Activated T-helper 2 cell treated with anti-CD3 and anti-CD28 coated beads, Interferon-gamma antibody, Interleukin-2, Interleukin-4, amounts not matched to agents 10 μg/mL and 5 μg/mL and 100 μg/mL, durations not matched to agents 14 hours and 24 hours and 36 hours (primary cell): ENCODE measurements at regions of chr1 and their contacts with region 1.

Region 1: GRCh38 chr1:156728597-156729462 is at the start of gene ISG20L2:
- DNase-seq: peak; percentile 96
- H3K4me3 Mint-ChIP-seq: no peak within 1 kb of the TSS
- H3K27ac Mint-ChIP-seq: peak within 1 kb of the TSS; percentile 99
- H3K4me1 Mint-ChIP-seq: peaks cover 20% of the 10 kb centered on the region
- H3K27me3 Mint-ChIP-seq: no peaks in the 10 kb centered on the region
- total RNA-seq, gene ISG20L2: 52.2 and 57.4 TPM in 2 replicates

Region 2: DNA sequence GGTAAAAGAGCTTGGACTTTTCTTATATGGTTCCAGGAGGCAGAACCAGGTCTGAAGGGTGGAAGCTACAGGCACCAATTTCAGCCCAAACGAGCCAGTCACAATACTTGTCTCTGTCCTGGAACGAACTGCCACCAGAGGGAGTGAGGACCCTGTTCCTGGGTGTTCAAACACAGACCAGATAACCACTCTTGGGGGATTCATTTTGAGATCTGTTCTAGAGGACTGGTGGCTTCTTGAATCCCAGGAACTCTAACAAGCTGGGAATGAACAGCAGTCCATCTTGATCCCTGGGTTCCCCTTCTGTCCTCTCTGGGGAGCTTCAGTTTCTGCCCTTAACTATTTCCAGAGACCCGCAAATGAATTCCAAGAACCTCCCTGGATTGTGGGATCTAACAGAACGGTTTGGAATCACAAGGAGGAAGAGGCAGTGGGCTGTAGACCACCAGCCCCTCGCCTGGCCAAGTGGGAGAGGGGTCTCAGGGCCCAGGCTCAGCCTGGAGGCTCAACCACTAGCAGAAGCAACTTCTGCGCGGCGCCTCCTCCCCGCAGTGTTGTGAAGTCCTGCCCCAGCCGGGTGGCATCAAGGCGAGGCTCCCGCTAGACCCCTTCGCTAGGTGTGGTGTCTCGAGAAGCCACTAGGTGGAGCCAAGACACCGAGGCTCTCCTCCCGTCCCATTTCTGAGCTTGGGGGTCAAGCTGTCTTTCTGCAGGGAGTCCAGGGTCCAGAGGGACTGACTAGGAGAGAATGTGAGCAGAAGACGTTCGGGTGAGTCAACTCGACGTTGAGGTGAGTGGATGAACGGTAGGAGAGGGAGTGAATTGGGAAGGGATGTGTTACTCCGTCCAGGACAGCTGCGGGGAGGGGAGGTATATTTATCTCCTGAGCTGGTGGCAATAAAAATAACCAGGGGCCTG is 39.5 kb before region 1 on chr1:
- intact Hi-C with region 1: loop called (anchors 1 kb)
- DNase-seq: peak; percentile 57
- H3K4me3 Mint-ChIP-seq: no peak overlapping the region
- H3K27ac Mint-ChIP-seq: no peak overlapping the region
- H3K4me1 Mint-ChIP-seq: peaks cover 20% of the 10 kb centered on the region
- H3K27me3 Mint-ChIP-seq: peaks cover 51% of the 10 kb centered on the region

Region 3: DNA sequence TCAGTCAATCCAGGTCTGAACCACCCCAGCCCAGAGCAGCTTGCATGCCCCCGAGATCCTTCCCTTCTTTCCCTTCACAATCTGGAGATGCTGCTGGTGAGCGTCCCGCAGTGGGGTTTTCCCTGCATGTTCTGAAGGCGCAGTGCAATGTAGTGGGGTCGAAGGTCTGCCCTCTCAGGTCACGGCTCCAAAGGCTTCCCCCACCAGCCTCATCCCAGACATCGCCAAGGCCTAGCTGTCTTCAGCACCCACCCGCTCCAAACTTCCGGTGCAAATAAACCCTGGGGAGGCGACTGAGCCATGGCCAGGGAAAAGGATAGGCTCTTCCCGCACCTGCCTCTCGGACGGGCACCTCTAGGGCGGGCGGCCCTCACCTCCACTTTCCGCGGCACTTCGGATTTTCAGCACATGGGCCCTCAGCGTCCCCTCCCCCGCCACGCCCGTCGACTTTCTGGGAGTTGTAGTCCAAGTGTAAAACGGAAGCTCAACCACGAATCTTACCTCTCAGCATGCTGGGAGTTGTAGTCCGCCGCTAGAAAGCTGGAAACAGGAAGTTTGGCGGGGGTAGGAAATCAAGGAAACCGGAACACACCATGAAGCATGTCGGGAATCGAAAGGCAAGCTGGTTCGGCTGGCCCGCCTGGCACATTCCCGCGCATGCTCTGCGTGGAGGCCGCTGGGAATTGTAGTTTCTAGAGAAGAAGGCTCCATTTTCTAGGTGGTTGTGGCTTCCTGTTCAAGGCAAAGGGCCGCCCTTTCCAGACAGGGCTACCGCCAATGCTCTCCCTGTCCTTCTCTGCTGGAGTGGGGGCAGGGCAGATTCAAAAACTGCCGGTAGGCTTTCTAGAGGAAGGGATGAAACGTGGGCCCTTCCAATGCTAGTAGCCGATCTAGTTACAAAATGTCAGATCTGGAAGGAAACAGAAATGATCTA is 12.1 kb after region 1 on chr1 and contains the start of gene MRPL24:
- intact Hi-C with region 1: loop called (anchors 1 kb)
- DNase-seq: peak; percentile 97
- H3K4me3 Mint-ChIP-seq: peak within 1 kb of the TSS; percentile 95
- H3K27ac Mint-ChIP-seq: peak within 1 kb of the TSS; percentile 92
- H3K4me1 Mint-ChIP-seq: peaks cover 29% of the 10 kb centered on the region
- H3K27me3 Mint-ChIP-seq: no peaks in the 10 kb centered on the region
- total RNA-seq, gene MRPL24: 116 and 124 TPM in 2 replicates

Region 4: GRCh38 chr1:156767101-156767878 is 38.5 kb after region 1 on chr1 and contains the start of gene PRCC:
- intact Hi-C with region 1: loop called (anchors 1 kb)
- DNase-seq: peak; percentile 98
- H3K4me3 Mint-ChIP-seq: no peak within 1 kb of the TSS
- H3K27ac Mint-ChIP-seq: no peak within 1 kb of the TSS
- H3K4me1 Mint-ChIP-seq: peaks cover 36% of the 10 kb centered on the region
- H3K27me3 Mint-ChIP-seq: no peaks in the 10 kb centered on the region
- total RNA-seq, gene PRCC: 94.8 and 110 TPM in 2 replicates

Region 5: DNA sequence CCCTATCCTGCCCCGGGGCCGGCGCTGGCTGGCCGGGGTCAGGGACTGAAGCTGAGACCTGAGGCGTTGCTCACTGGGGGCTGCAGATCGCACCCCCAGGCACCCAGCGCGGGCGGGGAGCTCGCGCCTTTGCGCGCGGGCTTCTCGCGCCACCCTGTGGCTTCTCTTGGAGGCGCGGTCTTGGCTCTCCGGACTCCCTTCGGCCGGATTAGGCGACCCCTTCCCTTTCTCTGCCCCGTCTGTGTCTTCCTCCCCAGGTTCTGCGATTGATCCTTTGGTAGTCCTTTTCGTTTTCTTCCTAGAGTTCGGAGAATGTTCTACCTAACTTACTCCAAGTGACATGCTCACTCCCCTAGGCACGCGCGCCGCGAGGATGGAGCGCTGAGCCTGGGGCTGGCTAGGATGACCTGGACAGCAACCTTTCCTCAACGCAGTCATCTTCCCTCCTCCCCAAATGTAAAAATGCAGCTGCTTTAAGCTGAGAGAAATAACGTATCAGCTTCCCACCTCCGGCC is 131.3 kb after region 1 on chr1:
- intact Hi-C with region 1: loop called (anchors 2 kb)
- DNase-seq: peak; percentile 48
- H3K4me3 Mint-ChIP-seq: peak overlapping the region; percentile 87
- H3K27ac Mint-ChIP-seq: peak overlapping the region; percentile 44
- H3K4me1 Mint-ChIP-seq: peaks cover 44% of the 10 kb centered on the region
- H3K27me3 Mint-ChIP-seq: peaks cover 27% of the 10 kb centered on the region

Region 6: DNA sequence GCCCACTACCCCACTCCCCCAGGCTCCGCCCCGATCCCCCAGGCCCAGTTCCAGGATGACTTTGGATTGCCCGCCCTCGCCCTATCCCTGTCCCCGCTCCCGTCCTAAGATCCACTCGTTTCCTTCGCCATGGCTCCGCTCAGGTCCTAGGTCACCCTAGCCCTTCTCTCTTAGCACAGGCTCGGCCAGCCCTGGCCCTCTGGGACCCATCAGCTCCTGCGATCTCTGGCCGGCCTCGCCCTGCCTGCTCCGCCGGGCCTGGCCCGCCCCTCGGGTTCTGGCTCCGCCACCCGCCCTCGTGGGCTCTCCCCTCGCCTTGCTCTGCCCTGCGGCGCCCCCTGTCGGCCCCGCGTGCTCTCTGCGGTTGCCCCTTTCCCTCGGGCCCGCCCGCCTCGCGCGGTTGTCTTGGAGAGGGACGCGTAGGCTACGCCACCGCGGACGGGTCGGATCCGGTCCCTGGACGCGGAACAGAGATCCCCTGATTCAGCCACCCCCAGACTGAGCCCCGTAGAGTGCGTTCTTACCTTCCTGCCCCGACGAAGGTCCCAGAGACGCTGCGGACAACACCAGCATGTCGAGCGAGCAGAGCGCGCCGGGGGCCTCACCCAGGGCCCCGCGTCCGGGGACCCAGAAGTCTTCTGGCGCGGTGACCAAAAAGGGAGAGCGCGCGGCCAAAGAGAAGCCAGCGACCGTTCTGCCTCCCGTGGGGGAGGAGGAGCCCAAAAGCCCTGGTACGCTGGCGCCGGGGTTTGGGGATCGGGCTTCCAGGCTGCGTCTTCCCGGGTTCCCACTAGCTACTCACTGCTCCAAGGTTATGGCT is 191.6 kb after region 1 on chr1 and contains the start of gene LRRC71:
- intact Hi-C with region 1: no loop called
- DNase-seq: peak; percentile 63
- H3K4me3 Mint-ChIP-seq: no peak within 1 kb of the TSS
- H3K27ac Mint-ChIP-seq: no peak within 1 kb of the TSS
- H3K4me1 Mint-ChIP-seq: peaks cover 3% of the 10 kb centered on the region
- H3K27me3 Mint-ChIP-seq: peaks cover 68% of the 10 kb centered on the region
- total RNA-seq, gene LRRC71: not detected in 2 replicates